ENCODE measurements at regions of chr12 and their contacts with region 1.

Region 1: GRCh38 chr12:88299567-88300101 is 157.5 kb downstream of the TMTC3 start:
- DNase-seq: peak in 1 of 9 donors; percentile 48
- ATAC-seq: no peak
- H3K4me3 ChIP-seq: no peak overlapping the region
- H3K4me3 Mint-ChIP-seq: no peak overlapping the region
- H3K27ac ChIP-seq: no peak overlapping the region
- H3K27ac Mint-ChIP-seq: peak overlapping the region in 1 of 9 donors; percentile 68
- H3K4me1 ChIP-seq: no peaks in the 10 kb centered on the region
- H3K4me1 Mint-ChIP-seq: peaks cover 0 to 14% (median 0%) of the 10 kb centered on the region in 7 donors
- H3K27me3 ChIP-seq: no peaks in the 10 kb centered on the region
- H3K27me3 Mint-ChIP-seq: no peaks in the 10 kb centered on the region

Region 2: GRCh38 chr12:88241862-88242570 is 57.6 kb before region 1 on chr12:
- CTCF ChIA-PET with region 1: no interaction called
- POLR2A ChIA-PET with region 1: no interaction called
- intact Hi-C with region 1: loop called in 1 of 2 experiments (anchors 1 kb)
- DNase-seq: no peak
- ATAC-seq: no peak
- H3K4me3 ChIP-seq: no peak overlapping the region
- H3K4me3 Mint-ChIP-seq: no peak overlapping the region
- H3K27ac ChIP-seq: no peak overlapping the region
- H3K27ac Mint-ChIP-seq: no peak overlapping the region
- H3K4me1 ChIP-seq: no peaks in the 10 kb centered on the region
- H3K4me1 Mint-ChIP-seq: peaks cover 0 to 17% (median 0%) of the 10 kb centered on the region in 7 donors
- H3K27me3 ChIP-seq: no peaks in the 10 kb centered on the region
- H3K27me3 Mint-ChIP-seq: peaks cover 0 to 15% (median 7%) of the 10 kb centered on the region in 5 donors

Region 3: GRCh38 chr12:88580051-88580871 is 280.6 kb after region 1 on chr12 and contains the start of gene KITLG:
- CTCF ChIA-PET with region 1: no interaction called
- POLR2A ChIA-PET with region 1: no interaction called
- intact Hi-C with region 1: no loop called
- DNase-seq: peak in 1 of 9 donors; percentile 42
- ATAC-seq: peak; percentile 44
- H3K4me3 ChIP-seq: no peak within 1 kb of the TSS
- H3K4me3 Mint-ChIP-seq: peak within 1 kb of the TSS in 7 of 10 donors; percentile 8 to 71 (median 44)
- H3K27ac ChIP-seq: no peak within 1 kb of the TSS
- H3K27ac Mint-ChIP-seq: no peak within 1 kb of the TSS
- H3K4me1 ChIP-seq: no peaks in the 10 kb centered on the region
- H3K4me1 Mint-ChIP-seq: peaks cover 4 to 11% (median 5%) of the 10 kb centered on the region in 7 donors
- H3K27me3 ChIP-seq: peaks cover 0 to 5% of the 10 kb centered on the region in 2 donors
- H3K27me3 Mint-ChIP-seq: peaks cover 30 to 63% (median 41%) of the 10 kb centered on the region in 5 donors
- total RNA-seq, gene KITLG: 0.05 to 0.24 TPM in 2 of 5 experiments, not detected in the others